ENCODE measurements at regions of chr16 and their contacts with region 1.

Region 1: DNA sequence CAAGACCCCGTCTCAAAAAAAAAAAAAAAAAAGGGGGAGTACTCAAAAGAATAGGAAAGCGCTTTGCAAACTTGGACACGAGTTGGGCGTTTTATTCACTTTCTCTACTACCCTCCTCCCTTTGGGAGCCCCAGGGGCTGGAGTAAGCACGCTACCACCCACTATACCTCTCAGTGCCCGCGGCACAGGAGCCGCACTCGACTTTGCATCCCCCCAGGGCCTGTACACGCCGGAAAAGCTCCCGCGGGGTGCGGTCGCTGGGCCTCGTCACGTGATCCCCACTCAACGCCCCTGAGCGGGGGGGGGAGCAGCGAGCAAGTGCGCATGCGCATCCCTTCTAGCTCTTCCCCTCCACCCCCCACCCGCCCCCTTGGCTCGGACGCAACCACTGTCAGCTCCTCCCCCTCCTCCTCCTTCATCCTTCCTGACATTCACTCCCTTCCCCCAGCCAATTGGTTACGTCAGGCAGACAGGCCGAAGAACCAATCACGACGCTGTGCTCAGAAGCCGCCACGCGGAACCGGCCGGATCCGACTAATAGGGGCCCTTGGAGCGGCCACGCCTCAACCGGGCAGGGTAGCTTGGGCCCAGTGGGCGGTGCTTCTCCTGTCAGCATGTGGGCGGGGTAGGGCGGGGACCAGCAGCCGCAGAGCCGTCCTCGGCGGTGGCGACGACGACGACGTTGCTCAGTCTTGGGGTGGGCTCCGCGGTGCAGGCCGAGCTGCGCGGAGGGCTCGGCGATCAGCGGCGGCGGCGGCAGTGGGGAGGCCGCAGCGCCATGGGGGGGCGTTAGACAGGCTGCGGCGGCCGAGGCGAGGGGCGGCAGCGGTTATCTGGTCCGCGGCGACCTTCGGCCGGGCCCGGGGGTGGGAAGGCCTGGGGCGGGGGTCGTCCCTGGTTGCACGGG is at the start of gene HAPSTR1:
- DNase-seq: peak; percentile 100
- H3K4me3 Mint-ChIP-seq: peak within 1 kb of the TSS; percentile 94
- H3K27ac Mint-ChIP-seq: peak within 1 kb of the TSS; percentile 92
- H3K4me1 Mint-ChIP-seq: peaks cover 27% of the 10 kb centered on the region
- H3K27me3 Mint-ChIP-seq: no peaks in the 10 kb centered on the region
- total RNA-seq, gene HAPSTR1: 41.2 to 42.6 TPM

Region 2: DNA sequence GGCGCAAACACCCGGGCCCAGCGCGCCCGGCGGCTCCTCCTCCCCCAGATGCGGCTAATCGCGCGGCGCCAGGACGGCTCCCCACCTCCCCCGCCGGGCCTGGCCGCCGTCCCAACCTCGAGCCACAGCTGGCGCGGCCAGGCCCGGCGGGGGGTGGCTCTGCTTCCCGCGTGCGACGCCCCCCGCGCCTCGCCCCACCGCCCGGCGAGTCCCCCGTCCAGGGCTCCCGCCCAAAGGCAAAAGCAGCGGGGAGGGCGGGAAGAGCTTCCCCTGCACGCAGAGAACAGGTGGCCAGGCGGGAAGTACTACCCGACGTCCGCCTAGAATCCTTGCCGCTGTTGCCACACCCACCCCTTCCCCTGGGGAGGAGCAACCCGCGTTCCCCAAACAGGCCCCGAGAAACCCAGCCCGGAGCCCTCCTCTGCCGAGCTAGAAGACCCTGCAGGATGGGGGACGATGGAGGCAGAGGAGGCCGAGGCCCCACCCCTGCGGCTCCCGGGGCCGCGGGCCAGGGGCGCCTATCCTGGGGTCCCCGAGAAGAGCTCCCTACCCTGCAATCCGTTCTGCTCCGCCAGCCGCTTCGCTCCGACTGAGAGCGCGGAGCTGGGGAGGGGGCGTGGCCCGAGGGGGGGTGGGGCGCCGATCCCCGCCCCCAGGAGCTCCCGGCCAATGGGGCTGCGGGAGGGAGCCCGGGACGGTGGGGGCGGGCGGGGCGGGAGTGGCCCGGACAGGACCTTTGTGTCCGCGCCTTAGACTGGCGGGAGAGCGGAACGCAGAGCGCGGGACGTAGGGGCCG is 222.6 kb before region 1 on chr16 and contains the start of gene CARHSP1:
- CTCF ChIA-PET with region 1: no interaction called
- intact Hi-C with region 1: loop called (anchors 1 kb)
- DNase-seq: peak; percentile 81
- H3K4me3 Mint-ChIP-seq: peak within 1 kb of the TSS; percentile 89
- H3K27ac Mint-ChIP-seq: peak within 1 kb of the TSS; percentile 83
- H3K4me1 Mint-ChIP-seq: peaks cover 36% of the 10 kb centered on the region
- H3K27me3 Mint-ChIP-seq: no peaks in the 10 kb centered on the region
- total RNA-seq, gene CARHSP1: 46.5 to 49.6 TPM

Region 3: DNA sequence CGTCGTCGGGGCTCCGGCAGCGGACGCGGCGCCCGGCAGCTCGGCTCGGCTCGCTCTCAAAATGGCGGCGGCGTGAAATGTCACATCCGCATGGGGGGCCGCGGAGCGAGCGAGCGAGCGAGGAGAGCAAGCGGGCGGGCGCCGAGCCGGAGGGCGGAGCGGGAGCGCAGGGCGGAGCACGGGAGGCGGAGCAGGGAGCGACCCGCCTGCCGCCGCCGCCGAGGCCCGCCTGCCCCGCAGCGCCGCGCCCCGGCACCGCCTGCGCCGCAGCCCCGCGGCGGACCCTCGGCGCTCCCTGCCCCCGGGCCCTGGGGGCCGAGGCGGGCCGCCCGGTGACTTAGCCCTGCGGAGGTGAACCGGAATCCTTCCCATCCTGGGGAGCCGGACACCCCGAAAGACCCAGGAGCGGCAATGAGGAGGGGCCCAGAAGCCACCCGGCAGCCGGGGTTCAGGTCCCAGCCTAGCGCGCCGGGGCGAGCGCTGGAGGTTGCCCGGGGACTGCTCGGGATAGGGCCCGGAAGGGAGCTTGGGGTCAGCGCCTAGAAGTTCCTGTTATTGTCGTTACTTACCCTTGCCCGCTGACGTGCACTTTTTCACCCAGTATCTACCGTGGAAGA is 127.3 kb before region 1 on chr16 and contains the start of gene USP7:
- CTCF ChIA-PET with region 1: no interaction called
- intact Hi-C with region 1: loop called (anchors 1 kb)
- DNase-seq: peak; percentile 94
- H3K4me3 Mint-ChIP-seq: peak within 1 kb of the TSS; percentile 86
- H3K27ac Mint-ChIP-seq: peak within 1 kb of the TSS; percentile 88
- H3K4me1 Mint-ChIP-seq: peaks cover 38% of the 10 kb centered on the region
- H3K27me3 Mint-ChIP-seq: peaks cover 3% of the 10 kb centered on the region
- total RNA-seq, gene USP7: 155 to 163 TPM

Region 4: GRCh38 chr16:9072806-9073341 is 18.3 kb before region 1 on chr16:
- CTCF ChIA-PET with region 1: no interaction called
- intact Hi-C with region 1: loop called (anchors 1 kb)
- DNase-seq: peak; percentile 68
- H3K4me3 Mint-ChIP-seq: peak overlapping the region; percentile 48
- H3K27ac Mint-ChIP-seq: peak overlapping the region; percentile 96
- H3K4me1 Mint-ChIP-seq: peaks cover 51% of the 10 kb centered on the region
- H3K27me3 Mint-ChIP-seq: no peaks in the 10 kb centered on the region

Region 5: GRCh38 chr16:9109255-9109654 is 18.0 kb after region 1 on chr16:
- CTCF ChIA-PET with region 1: no interaction called
- intact Hi-C with region 1: loop called (anchors 2 kb)
- DNase-seq: no peak
- H3K4me3 Mint-ChIP-seq: no peak overlapping the region
- H3K27ac Mint-ChIP-seq: no peak overlapping the region
- H3K4me1 Mint-ChIP-seq: peaks cover 90% of the 10 kb centered on the region
- H3K27me3 Mint-ChIP-seq: no peaks in the 10 kb centered on the region

Region 6: GRCh38 chr16:10944249-10945064 is 1853.2 kb after region 1 on chr16 and contains the start of gene CLEC16A:
- CTCF ChIA-PET with region 1: no interaction called
- intact Hi-C with region 1: loop called (anchors 1 kb)
- DNase-seq: peak; percentile 97
- H3K4me3 Mint-ChIP-seq: peak within 1 kb of the TSS; percentile 81
- H3K27ac Mint-ChIP-seq: peak within 1 kb of the TSS; percentile 70
- H3K4me1 Mint-ChIP-seq: peaks cover 61% of the 10 kb centered on the region
- H3K27me3 Mint-ChIP-seq: no peaks in the 10 kb centered on the region
- total RNA-seq, gene CLEC16A: 18.4 to 20.1 TPM

Measured in activated naive CD4-positive, alpha-beta T cell treated with anti-CD3 and anti-CD28 coated beads for 36 hours (primary cell).